RWPE1 (cell line): ENCODE measurements at regions of chr6 and their contacts with region 1.

Region 1: GRCh38 chr6:170516783-170517616 is 36.1 kb downstream of the PSMB1 start:
- DNase-seq: peak; percentile 26
- H3K27ac ChIP-seq: no peak overlapping the region
- CTCF ChIP-seq: peak; percentile 85

Region 2: GRCh38 chr6:169831450-169832246 is 685.4 kb before region 1 on chr6:
- CTCF ChIA-PET with region 1: interaction called, 17 read pairs
- POLR2A ChIA-PET with region 1: no interaction called
- DNase-seq: peak; percentile 50
- H3K27ac ChIP-seq: no peak overlapping the region
- CTCF ChIP-seq: peak; percentile 90

Region 3: GRCh38 chr6:170165072-170165463 is 351.9 kb before region 1 on chr6:
- CTCF ChIA-PET with region 1: no interaction called
- POLR2A ChIA-PET with region 1: no interaction called
- DNase-seq: no peak
- H3K27ac ChIP-seq: no peak overlapping the region
- CTCF ChIP-seq: no peak

Region 4: GRCh38 chr6:170505306-170505705 is 11.7 kb before region 1 on chr6:
- CTCF ChIA-PET with region 1: interaction called, 10 read pairs
- POLR2A ChIA-PET with region 1: no interaction called
- DNase-seq: no peak
- H3K27ac ChIP-seq: no peak overlapping the region
- CTCF ChIP-seq: no peak

Region 5: GRCh38 chr6:170529839-170530469 is 13.0 kb after region 1 on chr6:
- CTCF ChIA-PET with region 1: interaction called, 17 read pairs
- POLR2A ChIA-PET with region 1: no interaction called
- DNase-seq: peak; percentile 79
- H3K27ac ChIP-seq: peak overlapping the region; percentile 28; the same call in 1 of the 2 replicates
- CTCF ChIP-seq: peak; percentile 90